IMR-90 (cell line): ENCODE measurements at regions of chr10 and their contacts with region 1.

Region 1: DNA sequence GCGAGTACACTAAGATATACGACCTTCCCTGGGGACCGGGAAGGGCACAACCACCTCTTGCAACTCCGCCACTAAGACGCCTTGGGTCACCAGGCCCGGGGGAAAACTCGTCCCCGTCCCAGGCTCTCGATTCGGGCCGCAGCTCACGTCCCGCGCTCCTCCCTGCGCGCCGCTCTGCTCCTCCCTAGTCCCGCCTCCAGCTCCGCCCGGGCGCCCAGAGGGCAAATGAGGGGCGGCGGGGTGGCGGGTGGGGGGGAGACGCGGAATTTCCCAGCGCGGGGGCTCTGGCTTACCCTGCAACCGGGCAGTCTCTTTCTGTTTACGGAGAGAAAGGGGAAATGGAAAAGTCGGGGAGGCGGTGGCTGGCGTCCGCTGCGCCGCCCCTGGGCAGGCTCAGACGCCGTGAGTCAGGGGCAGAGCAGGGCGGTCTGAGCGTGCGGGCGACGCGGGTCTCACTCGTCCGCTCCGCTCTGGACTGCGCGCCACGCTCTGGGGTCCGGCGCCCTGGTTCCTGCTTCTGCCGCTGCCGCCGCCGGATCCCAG is at the start of gene MAP3K8:
- DNase-seq: peak; percentile 86
- ATAC-seq: peak; percentile 85
- H3K4me3 ChIP-seq: peak within 1 kb of the TSS; percentile 77
- H3K27ac ChIP-seq: peak within 1 kb of the TSS; percentile 73
- H3K4me1 ChIP-seq: peaks cover 20% of the 10 kb centered on the region
- H3K27me3 ChIP-seq: no peaks in the 10 kb centered on the region
- CTCF ChIP-seq: no peak
- POLR2A ChIP-seq: peak; percentile 92
- RAD21 ChIP-seq: no peak
- total RNA-seq, gene MAP3K8: 1.8 and 3.9 TPM in 2 replicates

Region 2: DNA sequence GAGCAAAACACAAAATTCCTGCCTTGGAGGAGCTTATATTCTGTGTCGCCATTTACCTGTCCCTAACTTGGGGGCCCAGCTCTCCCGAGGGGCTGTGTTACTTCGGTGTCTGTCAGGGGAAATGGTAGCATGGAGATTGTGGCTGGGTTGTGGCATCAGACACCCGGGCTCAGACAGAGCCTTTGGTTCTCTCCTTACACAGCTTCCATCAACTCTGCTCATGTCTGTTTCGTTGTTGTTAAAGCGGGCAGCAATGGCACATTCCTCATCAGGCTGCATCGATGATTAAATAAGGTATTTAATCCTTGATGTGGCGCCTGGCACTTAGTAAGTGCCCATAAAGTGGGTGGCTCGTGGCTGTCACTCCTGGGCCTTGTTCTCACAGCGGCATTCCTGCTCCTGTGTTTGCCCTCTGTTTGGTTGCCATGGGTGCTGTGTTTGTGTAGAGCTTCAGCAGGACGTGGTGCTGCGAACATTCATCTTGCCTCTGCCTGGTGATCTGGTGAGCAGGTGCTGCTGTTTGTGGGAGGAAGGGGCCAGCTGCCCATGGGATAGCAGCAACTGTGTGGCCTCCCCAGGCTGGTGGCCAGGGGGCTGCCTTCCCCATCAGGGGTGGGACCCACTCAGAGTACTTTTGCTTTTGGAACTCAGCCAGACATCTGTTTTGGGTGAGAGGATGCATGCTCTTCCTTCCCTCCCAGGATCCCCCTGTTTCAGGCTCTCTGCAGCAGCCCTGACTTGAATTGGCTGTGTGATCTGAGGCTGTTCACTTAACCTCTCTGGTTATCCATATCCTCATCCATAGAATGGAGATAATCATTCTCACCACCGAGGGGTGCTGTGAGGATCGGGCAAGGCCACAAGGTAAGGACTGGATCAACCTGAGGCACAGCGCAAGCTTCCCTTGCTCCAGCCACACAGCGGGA is 591.8 kb before region 1 on chr10:
- CTCF ChIA-PET with region 1: no interaction called
- POLR2A ChIA-PET with region 1: no interaction called
- dilution Hi-C with region 1: no loop called
- in situ Hi-C with region 1: no loop called
- intact Hi-C with region 1: no loop called
- DNase-seq: peak; percentile 34
- ATAC-seq: no peak
- H3K4me3 ChIP-seq: no peak overlapping the region
- H3K27ac ChIP-seq: no peak overlapping the region
- H3K4me1 ChIP-seq: no peaks in the 10 kb centered on the region
- H3K27me3 ChIP-seq: peaks cover 12% of the 10 kb centered on the region
- CTCF ChIP-seq: no peak
- POLR2A ChIP-seq: no peak
- RAD21 ChIP-seq: no peak

Region 3: GRCh38 chr10:30422981-30423654 is 10.7 kb before region 1 on chr10:
- CTCF ChIA-PET with region 1: interaction called, 6 read pairs
- POLR2A ChIA-PET with region 1: no interaction called
- dilution Hi-C with region 1: no loop called
- in situ Hi-C with region 1: no loop called
- intact Hi-C with region 1: loop called (anchors 1 kb)
- DNase-seq: peak; percentile 86
- ATAC-seq: peak; percentile 94
- H3K4me3 ChIP-seq: no peak overlapping the region
- H3K27ac ChIP-seq: peak overlapping the region; percentile 33; the same call in 1 of the 2 replicates
- H3K4me1 ChIP-seq: peaks cover 10% of the 10 kb centered on the region
- H3K27me3 ChIP-seq: no peaks in the 10 kb centered on the region
- CTCF ChIP-seq: no peak
- POLR2A ChIP-seq: 0 out of 2 replicates have a peak, but pooled peaks have one; percentile 33
- RAD21 ChIP-seq: no peak

Region 4: GRCh38 chr10:30562787-30563186 is 129.0 kb after region 1 on chr10:
- CTCF ChIA-PET with region 1: no interaction called
- POLR2A ChIA-PET with region 1: no interaction called
- dilution Hi-C with region 1: no loop called
- in situ Hi-C with region 1: no loop called
- intact Hi-C with region 1: no loop called
- DNase-seq: no peak
- ATAC-seq: no peak
- H3K4me3 ChIP-seq: no peak overlapping the region
- H3K27ac ChIP-seq: no peak overlapping the region
- H3K4me1 ChIP-seq: no peaks in the 10 kb centered on the region
- H3K27me3 ChIP-seq: peaks cover 18% of the 10 kb centered on the region
- CTCF ChIP-seq: no peak
- POLR2A ChIP-seq: no peak
- RAD21 ChIP-seq: no peak